OCI-LY7 (cell line): ENCODE measurements at regions of chr6 and their contacts with region 1.

Region 1: DNA sequence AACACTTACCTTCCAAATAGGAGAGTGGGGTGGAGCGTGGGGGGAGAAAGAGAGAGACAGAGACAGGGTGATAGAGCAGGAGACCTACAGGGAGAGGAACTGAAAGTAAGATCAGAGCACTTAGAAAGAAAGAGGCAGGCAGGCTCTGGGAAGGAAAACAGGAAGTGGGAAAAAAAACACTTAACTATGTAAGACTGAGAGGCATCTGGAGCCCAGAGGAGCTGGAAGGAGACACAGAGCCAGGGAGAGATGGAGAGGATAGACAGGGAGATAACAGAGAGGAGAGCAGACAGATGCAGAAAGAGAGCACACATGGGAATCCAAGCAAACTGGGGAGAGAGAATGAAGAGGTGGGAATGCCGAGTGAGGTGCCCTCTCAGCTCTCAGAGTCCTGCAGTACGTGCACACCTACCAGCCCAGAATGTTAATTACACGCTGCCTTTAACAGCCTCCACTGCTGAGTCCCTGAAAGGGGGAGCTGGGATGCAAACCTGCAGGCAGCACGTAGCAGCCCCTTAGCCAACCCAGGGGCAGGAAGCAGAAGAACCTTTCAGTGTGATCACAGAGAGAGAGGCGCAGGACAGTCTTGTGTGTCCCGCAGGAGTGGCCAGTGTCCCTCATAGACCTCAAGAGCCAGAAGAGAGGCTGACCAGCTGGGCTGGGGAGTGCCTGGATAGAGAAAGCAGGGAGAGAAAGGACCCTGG is 132.7 kb upstream of the LRFN2 start:
- DNase-seq: peak; percentile 65
- H3K4me3 ChIP-seq: peak overlapping the region; percentile 47
- H3K27ac ChIP-seq: peak overlapping the region; percentile 10
- H3K4me1 ChIP-seq: peaks cover 44% of the 10 kb centered on the region
- CTCF ChIP-seq: no peak

Region 2: GRCh38 chr6:40695112-40695511 is 24.7 kb before region 1 on chr6:
- CTCF ChIA-PET with region 1: no interaction called
- POLR2A ChIA-PET with region 1: no interaction called
- intact Hi-C with region 1: no loop called
- DNase-seq: no peak
- H3K4me3 ChIP-seq: no peak overlapping the region
- H3K27ac ChIP-seq: no peak overlapping the region
- H3K4me1 ChIP-seq: no peaks in the 10 kb centered on the region
- CTCF ChIP-seq: no peak

Region 3: GRCh38 chr6:40755046-40755681 is 35.3 kb after region 1 on chr6:
- CTCF ChIA-PET with region 1: no interaction called
- POLR2A ChIA-PET with region 1: no interaction called
- intact Hi-C with region 1: loop called (anchors 5 kb)
- DNase-seq: no peak
- H3K4me3 ChIP-seq: no peak overlapping the region
- H3K27ac ChIP-seq: no peak overlapping the region
- H3K4me1 ChIP-seq: peaks cover 16% of the 10 kb centered on the region
- CTCF ChIP-seq: no peak